Activated CD4-positive, alpha-beta T cell treated with anti-CD3 and anti-CD28 coated beads for 36 hours (primary cell): ENCODE measurements at regions of chr2 and their contacts with region 1.

Region 1: GRCh38 chr2:46067851-46068305 is 229.3 kb upstream of the EPAS1 start:
- DNase-seq: no peak
- ATAC-seq: peak; percentile 86
- H3K4me3 Mint-ChIP-seq: no peak overlapping the region
- H3K27ac Mint-ChIP-seq: peak overlapping the region; percentile 48
- H3K4me1 Mint-ChIP-seq: peaks cover 25% of the 10 kb centered on the region
- H3K27me3 Mint-ChIP-seq: no peaks in the 10 kb centered on the region

Region 2: DNA sequence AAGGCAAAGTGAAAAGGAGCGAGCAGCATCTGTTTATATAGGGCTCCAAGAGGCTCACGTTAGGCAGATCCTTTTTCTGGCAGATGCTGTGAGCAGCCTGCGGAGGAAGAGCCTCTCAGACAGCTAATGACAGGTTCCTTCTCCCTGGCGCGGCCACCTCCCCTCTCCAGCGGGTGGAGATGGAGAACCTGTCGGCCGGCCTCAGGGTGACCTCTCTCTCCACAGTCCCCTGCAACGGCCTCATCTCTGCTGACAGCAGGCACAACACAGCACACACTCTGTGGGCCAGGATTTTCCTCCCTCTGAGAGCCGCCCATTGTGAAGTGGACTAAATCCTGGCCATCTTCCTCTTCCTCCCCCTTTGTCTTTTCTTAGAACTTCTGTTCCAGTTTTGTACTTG is 296.6 kb before region 1 on chr2:
- CTCF ChIA-PET with region 1: no interaction called
- POLR2A ChIA-PET with region 1: no interaction called
- intact Hi-C with region 1: no loop called
- DNase-seq: no peak
- ATAC-seq: no peak
- H3K4me3 Mint-ChIP-seq: no peak overlapping the region
- H3K27ac Mint-ChIP-seq: no peak overlapping the region
- H3K4me1 Mint-ChIP-seq: peaks cover 3% of the 10 kb centered on the region
- H3K27me3 Mint-ChIP-seq: no peaks in the 10 kb centered on the region

Region 3: GRCh38 chr2:46029332-46029811 is 38.5 kb before region 1 on chr2:
- CTCF ChIA-PET with region 1: interaction called, 12 read pairs
- POLR2A ChIA-PET with region 1: no interaction called
- intact Hi-C with region 1: loop called in 1 of 2 experiments (anchors 5 kb)
- DNase-seq: no peak
- ATAC-seq: no peak
- H3K4me3 Mint-ChIP-seq: no peak overlapping the region
- H3K27ac Mint-ChIP-seq: no peak overlapping the region
- H3K4me1 Mint-ChIP-seq: peaks cover 24% of the 10 kb centered on the region
- H3K27me3 Mint-ChIP-seq: no peaks in the 10 kb centered on the region

Region 4: GRCh38 chr2:46229134-46230063 is 161.5 kb after region 1 on chr2:
- CTCF ChIA-PET with region 1: interaction called, 4 read pairs
- POLR2A ChIA-PET with region 1: no interaction called
- intact Hi-C with region 1: loop called in 1 of 2 experiments (anchors 5 kb)
- DNase-seq: peak; percentile 39
- ATAC-seq: peak; percentile 76
- H3K4me3 Mint-ChIP-seq: no peak overlapping the region
- H3K27ac Mint-ChIP-seq: peak overlapping the region; percentile 68
- H3K4me1 Mint-ChIP-seq: peaks cover 42% of the 10 kb centered on the region
- H3K27me3 Mint-ChIP-seq: no peaks in the 10 kb centered on the region